ENCODE measurements at regions of chr5 and their contacts with region 1.

Region 1: DNA sequence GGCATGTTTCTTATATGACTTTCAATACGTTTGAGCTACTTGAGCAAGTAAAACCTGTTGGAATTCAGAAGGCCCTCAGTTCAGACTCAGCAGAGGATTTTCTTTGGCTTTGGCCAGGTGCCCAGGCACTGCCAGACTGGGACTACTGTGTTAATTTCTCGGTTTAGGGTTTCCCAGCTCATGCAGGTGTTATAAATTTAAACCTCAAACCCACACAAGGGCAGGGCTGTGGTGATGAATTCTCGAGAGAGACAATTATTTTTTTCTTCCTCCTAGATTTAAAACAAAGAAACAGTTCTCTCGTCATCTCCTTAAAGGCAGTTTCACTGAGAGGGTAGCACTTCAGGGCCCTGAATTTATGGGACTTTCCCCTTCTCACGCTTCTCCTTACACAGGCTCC is 406.0 kb upstream of the PIK3R1 start:
- DNase-seq: no peak
- ATAC-seq: no peak

Region 2: GRCh38 chr5:67677422-67677970 is 132.1 kb before region 1 on chr5:
- intact Hi-C with region 1: loop called in 1 of 2 experiments (anchors 5 kb)
- DNase-seq: no peak
- ATAC-seq: peak in 1 of 2 donors; percentile 38

Region 3: GRCh38 chr5:67693956-67694809 is 115.4 kb before region 1 on chr5:
- intact Hi-C with region 1: loop called (anchors 10 kb)
- DNase-seq: peak; percentile 59
- ATAC-seq: peak; percentile 97

Region 4: GRCh38 chr5:68215208-68215897 is 405.8 kb after region 1 on chr5 and contains the start of gene PIK3R1:
- intact Hi-C with region 1: loop called in 1 of 2 experiments (anchors 10 kb)
- DNase-seq: peak; percentile 95
- ATAC-seq: peak; percentile 96 to 98
- total RNA-seq, gene PIK3R1: 61.8 to 127 TPM